ENCODE measurements at regions of chr2 and their contacts with region 1.

Region 1: GRCh38 chr2:109510136-109511028 is 103.4 kb downstream of the SEPTIN10 start:
- DNase-seq: peak; percentile 66 to 85 (median 72)
- ATAC-seq: peak; percentile 95
- H3K4me3 ChIP-seq: no peak overlapping the region
- H3K4me3 Mint-ChIP-seq: no peak overlapping the region
- H3K27ac ChIP-seq: no peak overlapping the region
- H3K27ac Mint-ChIP-seq: no peak overlapping the region
- H3K4me1 ChIP-seq: peaks cover 7% of the 10 kb centered on the region
- H3K4me1 Mint-ChIP-seq: no peaks in the 10 kb centered on the region
- H3K27me3 ChIP-seq: peaks cover 0 to 3% of the 10 kb centered on the region in 2 experiments
- H3K27me3 Mint-ChIP-seq: no peaks in the 10 kb centered on the region
- CTCF ChIP-seq: peak; percentile 82

Region 2: GRCh38 chr2:108855194-108855593 is 655.2 kb before region 1 on chr2:
- CTCF ChIA-PET with region 1: interaction called, 10 read pairs
- POLR2A ChIA-PET with region 1: no interaction called
- intact Hi-C with region 1: loop called (anchors 1 kb)
- DNase-seq: peak in 3 of 14 experiments; percentile 50 to 54 (median 51)
- ATAC-seq: peak; percentile 82
- H3K4me3 ChIP-seq: no peak overlapping the region
- H3K4me3 Mint-ChIP-seq: no peak overlapping the region
- H3K27ac ChIP-seq: no peak overlapping the region
- H3K27ac Mint-ChIP-seq: no peak overlapping the region
- H3K4me1 ChIP-seq: no peaks in the 10 kb centered on the region
- H3K4me1 Mint-ChIP-seq: peaks cover 3% of the 10 kb centered on the region
- H3K27me3 ChIP-seq: no peaks in the 10 kb centered on the region
- H3K27me3 Mint-ChIP-seq: no peaks in the 10 kb centered on the region
- CTCF ChIP-seq: peak; percentile 64

Region 3: DNA sequence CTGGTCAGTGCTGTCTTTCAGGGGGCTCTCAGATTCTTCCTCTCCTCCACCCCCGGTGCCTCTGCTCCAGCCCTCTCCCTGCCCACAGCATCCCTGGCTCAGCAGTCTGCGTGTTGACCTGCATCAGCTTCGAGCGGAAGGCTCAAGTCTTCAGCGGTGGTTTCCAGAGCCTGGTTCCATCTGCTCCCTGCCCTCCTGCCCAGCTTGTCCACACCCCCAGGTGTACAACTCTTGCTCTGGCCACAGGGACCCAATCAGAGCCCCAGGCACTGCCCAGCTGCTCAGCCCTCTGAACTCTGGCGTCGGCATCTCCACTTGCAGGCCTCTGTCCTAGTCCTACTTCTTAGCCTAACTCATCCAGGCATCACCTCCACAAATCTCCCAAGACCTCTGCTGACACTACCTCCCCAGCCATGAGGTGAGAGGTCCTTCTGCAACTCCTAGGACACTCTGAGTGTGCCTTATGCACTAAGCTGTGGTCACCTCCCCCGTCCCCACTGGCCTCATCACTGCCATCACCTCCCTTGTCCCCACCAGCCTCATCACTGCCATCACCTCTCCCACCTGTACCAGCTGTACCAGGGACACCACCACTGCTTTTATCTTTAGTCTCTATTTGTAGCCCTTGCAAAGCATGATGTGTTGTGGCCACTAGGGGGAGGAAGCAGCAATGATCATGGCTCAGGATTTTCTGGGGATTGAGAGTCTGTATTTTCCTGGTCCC is 582.3 kb before region 1 on chr2:
- CTCF ChIA-PET with region 1: interaction called, 3 read pairs
- POLR2A ChIA-PET with region 1: no interaction called
- intact Hi-C with region 1: loop called (anchors 1 kb)
- DNase-seq: peak in 13 of 14 experiments; percentile 8 to 72 (median 32)
- ATAC-seq: peak; percentile 73
- H3K4me3 ChIP-seq: no peak overlapping the region
- H3K4me3 Mint-ChIP-seq: no peak overlapping the region
- H3K27ac ChIP-seq: no peak overlapping the region
- H3K27ac Mint-ChIP-seq: no peak overlapping the region
- H3K4me1 ChIP-seq: peaks cover 6% of the 10 kb centered on the region
- H3K4me1 Mint-ChIP-seq: peaks cover 13% of the 10 kb centered on the region
- H3K27me3 ChIP-seq: no peaks in the 10 kb centered on the region
- H3K27me3 Mint-ChIP-seq: no peaks in the 10 kb centered on the region
- CTCF ChIP-seq: peak; percentile 82

Region 4: DNA sequence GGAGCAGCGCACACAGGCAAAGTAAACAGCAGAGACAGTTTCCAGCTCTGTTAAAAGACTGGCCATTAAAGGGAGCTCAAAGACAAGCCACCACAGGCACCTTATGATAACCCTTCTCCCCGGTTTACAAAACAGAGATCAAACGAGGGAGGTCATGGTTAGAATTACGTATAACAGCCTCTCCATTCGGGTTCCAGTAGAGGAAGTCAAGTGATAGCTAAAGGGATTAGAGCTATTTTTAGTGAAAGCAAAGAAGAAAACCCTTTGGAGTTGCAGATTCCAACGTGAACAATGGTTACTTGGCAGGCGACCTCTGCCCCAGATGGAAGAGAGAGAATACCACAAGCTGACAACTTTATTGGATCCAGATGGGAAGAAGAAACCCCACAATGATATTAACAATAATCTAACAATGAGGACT is 490.2 kb before region 1 on chr2:
- CTCF ChIA-PET with region 1: no interaction called
- POLR2A ChIA-PET with region 1: no interaction called
- intact Hi-C with region 1: loop called in 1 of 2 experiments (anchors 5 kb)
- DNase-seq: peak in 4 of 14 experiments; percentile 19 to 49 (median 46)
- ATAC-seq: peak; percentile 96
- H3K4me3 ChIP-seq: no peak overlapping the region
- H3K4me3 Mint-ChIP-seq: no peak overlapping the region
- H3K27ac ChIP-seq: no peak overlapping the region
- H3K27ac Mint-ChIP-seq: peak overlapping the region; percentile 7
- H3K4me1 ChIP-seq: peaks cover 15% of the 10 kb centered on the region
- H3K4me1 Mint-ChIP-seq: peaks cover 40% of the 10 kb centered on the region
- H3K27me3 ChIP-seq: no peaks in the 10 kb centered on the region
- H3K27me3 Mint-ChIP-seq: no peaks in the 10 kb centered on the region
- CTCF ChIP-seq: no peak

Measured in CD4-positive, alpha-beta T cell (primary cell).